Activated B cell treated with CpG ODN at 0.5 μM for 24 hours (primary cell): ENCODE measurements at regions of chr2 and their contacts with region 1.

Region 1: GRCh38 chr2:138090330-138090729 is 126.1 kb downstream of the HNMT start:
- DNase-seq: no peak
- ATAC-seq: no peak
- H3K4me3 Mint-ChIP-seq: no peak overlapping the region
- H3K27ac Mint-ChIP-seq: no peak overlapping the region
- H3K4me1 Mint-ChIP-seq: no peaks in the 10 kb centered on the region
- H3K27me3 Mint-ChIP-seq: no peaks in the 10 kb centered on the region
- CTCF ChIP-seq: no peak

Region 2: DNA sequence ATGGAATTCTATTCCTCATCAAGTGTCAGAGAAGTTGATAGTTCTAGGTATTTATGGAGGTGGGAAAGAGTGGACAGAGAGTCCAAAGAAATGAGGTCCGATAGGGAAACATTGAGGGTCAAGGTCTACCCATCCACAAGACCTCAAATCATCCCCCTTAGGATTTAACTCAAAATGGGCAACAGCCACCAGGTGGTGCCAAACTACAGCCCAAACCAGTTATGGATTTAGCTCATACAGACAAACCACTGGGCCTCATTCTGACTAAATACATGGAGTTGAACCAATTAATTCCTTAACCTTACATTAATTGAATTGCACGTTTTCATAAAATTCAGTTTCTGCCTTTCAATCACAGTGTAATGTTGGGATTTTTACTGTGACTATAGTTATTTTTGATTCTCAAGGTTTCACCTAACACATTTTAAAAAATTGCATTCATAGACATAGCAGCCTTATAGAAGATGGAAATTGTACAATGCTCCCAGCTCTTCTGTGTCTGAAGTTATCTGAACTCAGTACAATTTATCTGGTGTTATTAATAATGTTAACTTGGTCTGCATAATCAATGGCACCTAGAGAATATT is 224.3 kb before region 1 on chr2:
- CTCF ChIA-PET with region 1: no interaction called
- POLR2A ChIA-PET with region 1: no interaction called
- intact Hi-C with region 1: loop called (anchors 10 kb)
- DNase-seq: peak; percentile 19
- ATAC-seq: peak; percentile 28
- H3K4me3 Mint-ChIP-seq: no peak overlapping the region
- H3K27ac Mint-ChIP-seq: no peak overlapping the region
- H3K4me1 Mint-ChIP-seq: no peaks in the 10 kb centered on the region
- H3K27me3 Mint-ChIP-seq: no peaks in the 10 kb centered on the region
- CTCF ChIP-seq: no peak

Region 3: GRCh38 chr2:137947728-137948336 is 142.5 kb before region 1 on chr2:
- CTCF ChIA-PET with region 1: no interaction called
- POLR2A ChIA-PET with region 1: no interaction called
- intact Hi-C with region 1: loop called (anchors 1 kb)
- DNase-seq: no peak
- ATAC-seq: no peak
- H3K4me3 Mint-ChIP-seq: no peak overlapping the region
- H3K27ac Mint-ChIP-seq: no peak overlapping the region
- H3K4me1 Mint-ChIP-seq: peaks cover 7% of the 10 kb centered on the region
- H3K27me3 Mint-ChIP-seq: no peaks in the 10 kb centered on the region
- CTCF ChIP-seq: no peak

Region 4: DNA sequence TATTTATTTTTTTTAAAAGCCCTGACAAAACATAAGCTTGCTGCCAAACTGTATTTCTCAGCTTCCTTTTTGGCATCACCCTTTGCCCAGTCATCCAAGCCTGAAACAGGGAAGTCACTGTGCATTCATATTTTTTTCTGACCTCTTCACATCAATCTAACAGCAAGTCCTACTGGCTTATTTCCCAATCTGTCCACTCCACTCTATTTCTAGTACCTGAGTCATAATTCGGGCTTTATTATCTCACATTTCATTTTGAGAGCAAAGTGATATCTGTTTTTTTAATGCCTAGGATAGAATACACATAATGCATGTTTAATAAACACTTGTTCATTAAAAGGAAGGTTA is 120.9 kb before region 1 on chr2:
- CTCF ChIA-PET with region 1: no interaction called
- POLR2A ChIA-PET with region 1: no interaction called
- intact Hi-C with region 1: no loop called
- DNase-seq: no peak
- ATAC-seq: no peak
- H3K4me3 Mint-ChIP-seq: no peak overlapping the region
- H3K27ac Mint-ChIP-seq: no peak overlapping the region
- H3K4me1 Mint-ChIP-seq: no peaks in the 10 kb centered on the region
- H3K27me3 Mint-ChIP-seq: peaks cover 5% of the 10 kb centered on the region
- CTCF ChIP-seq: no peak